Aorta (tissue), 5 donors: ENCODE measurements at regions of chr7 and their contacts with region 1.

Region 1: DNA sequence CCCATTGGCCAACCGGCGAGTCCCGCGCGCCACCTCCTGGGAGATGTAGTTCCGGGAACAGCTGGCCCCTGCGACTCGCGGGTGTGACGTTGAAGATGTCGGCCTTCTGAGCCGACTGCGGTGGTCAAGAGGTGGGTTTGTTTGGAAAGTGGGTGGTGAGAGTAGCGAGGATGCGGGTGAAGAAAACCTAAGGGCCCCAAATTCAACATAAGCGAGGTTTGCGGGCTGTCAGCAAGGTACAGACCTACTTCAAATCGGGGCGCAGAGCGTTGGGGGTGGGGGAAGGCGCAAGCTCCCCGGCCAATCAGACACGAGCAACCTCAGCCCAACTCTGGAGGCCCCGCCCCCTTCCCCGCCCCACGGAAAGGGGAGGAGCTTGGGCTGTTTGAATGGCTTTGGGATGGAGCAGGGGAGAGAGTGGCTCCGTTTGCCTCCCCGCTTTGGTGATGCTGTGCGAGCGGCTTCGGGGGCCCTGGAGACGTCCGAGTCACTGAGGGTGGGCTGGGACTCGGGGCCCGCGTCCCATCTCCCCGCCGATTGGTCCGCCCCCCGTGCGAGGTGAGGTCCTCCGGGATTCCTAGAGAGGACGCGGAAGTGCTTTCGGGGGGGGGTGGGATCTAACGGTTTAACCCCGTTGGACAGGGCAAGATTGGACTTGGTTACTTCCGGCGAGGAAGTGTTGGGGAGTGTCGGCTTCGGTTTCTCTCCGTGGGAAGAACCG is at the start of gene ZKSCAN5:
- DNase-seq: peak; percentile 99 to 100
- ATAC-seq: peak; percentile 97
- H3K4me3 ChIP-seq: peak within 1 kb of the TSS; percentile 73 to 84
- H3K27ac ChIP-seq: peak within 1 kb of the TSS in 1 of 2 donors; percentile 79
- H3K4me1 ChIP-seq: peaks cover 0 to 3% of the 10 kb centered on the region in 2 donors
- H3K27me3 ChIP-seq: no peaks in the 10 kb centered on the region
- total RNA-seq, gene ZKSCAN5: 7.8 to 8.9 TPM

Region 2: DNA sequence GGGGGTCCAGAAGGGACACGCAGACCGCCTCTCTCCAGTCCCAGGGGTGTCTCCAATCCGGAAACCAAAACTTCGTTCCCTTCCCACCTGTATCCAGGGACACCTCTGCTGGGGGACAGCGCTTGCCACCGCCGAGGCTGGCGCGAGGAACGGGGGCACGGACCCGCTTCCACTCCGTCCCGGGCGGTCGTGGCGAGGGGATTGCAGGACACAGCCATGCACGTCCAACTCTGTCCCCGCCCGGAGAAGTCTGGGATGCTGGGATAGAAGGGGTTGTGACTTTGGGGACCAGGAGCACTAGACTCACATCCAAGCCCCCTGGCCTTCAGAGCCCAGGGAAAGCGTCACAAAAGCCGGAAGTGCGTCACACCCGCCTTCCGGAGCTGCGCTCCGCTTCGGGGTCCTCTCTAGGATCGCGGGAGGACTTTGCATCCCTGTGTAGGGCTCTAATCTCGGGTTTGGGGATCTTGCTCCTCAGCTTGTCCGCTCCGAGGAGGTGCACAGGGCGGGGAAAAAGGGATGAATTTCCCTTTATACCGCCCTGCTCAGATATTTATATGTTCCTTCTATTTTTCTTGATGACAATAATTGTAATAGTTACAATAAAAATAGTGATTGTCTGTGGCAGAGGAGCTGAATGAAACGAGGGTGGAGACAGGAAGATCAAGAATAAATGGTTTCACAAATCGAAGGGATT is 47.2 kb after region 1 on chr7 and contains the start of gene FAM200A:
- intact Hi-C with region 1: loop called (anchors 5 kb)
- DNase-seq: peak; percentile 94 to 97
- ATAC-seq: peak; percentile 97
- H3K4me3 ChIP-seq: peak within 1 kb of the TSS; percentile 82 to 85
- H3K27ac ChIP-seq: peak within 1 kb of the TSS in 1 of 2 donors; percentile 67
- H3K4me1 ChIP-seq: no peaks in the 10 kb centered on the region
- H3K27me3 ChIP-seq: no peaks in the 10 kb centered on the region
- total RNA-seq, gene FAM200A: 3.0 to 5.9 TPM